Heart left ventricle (tissue), 16 donors: ENCODE measurements at regions of chr17 and their contacts with region 1.

Region 1: GRCh38 chr17:6104956-6105648 is 34.9 kb downstream of the WSCD1 start:
- DNase-seq: no peak
- ATAC-seq: no peak
- H3K4me3 ChIP-seq: no peak overlapping the region
- H3K27ac ChIP-seq: no peak overlapping the region
- H3K4me1 ChIP-seq: peaks cover 0 to 12% (median 0%) of the 10 kb centered on the region in 12 donors
- H3K27me3 ChIP-seq: peaks cover 0 to 9% (median 0%) of the 10 kb centered on the region in 9 donors
- CTCF ChIP-seq: no peak
- POLR2A ChIP-seq: no peak

Region 2: GRCh38 chr17:6257336-6257735 is 152.2 kb after region 1 on chr17:
- intact Hi-C with region 1: no loop called
- DNase-seq: no peak
- ATAC-seq: no peak
- H3K4me3 ChIP-seq: no peak overlapping the region
- H3K27ac ChIP-seq: no peak overlapping the region
- H3K4me1 ChIP-seq: peaks cover 0 to 4% (median 0%) of the 10 kb centered on the region in 12 donors
- H3K27me3 ChIP-seq: peaks cover 0 to 17% (median 0%) of the 10 kb centered on the region in 9 donors
- CTCF ChIP-seq: no peak
- POLR2A ChIP-seq: no peak

Region 3: DNA sequence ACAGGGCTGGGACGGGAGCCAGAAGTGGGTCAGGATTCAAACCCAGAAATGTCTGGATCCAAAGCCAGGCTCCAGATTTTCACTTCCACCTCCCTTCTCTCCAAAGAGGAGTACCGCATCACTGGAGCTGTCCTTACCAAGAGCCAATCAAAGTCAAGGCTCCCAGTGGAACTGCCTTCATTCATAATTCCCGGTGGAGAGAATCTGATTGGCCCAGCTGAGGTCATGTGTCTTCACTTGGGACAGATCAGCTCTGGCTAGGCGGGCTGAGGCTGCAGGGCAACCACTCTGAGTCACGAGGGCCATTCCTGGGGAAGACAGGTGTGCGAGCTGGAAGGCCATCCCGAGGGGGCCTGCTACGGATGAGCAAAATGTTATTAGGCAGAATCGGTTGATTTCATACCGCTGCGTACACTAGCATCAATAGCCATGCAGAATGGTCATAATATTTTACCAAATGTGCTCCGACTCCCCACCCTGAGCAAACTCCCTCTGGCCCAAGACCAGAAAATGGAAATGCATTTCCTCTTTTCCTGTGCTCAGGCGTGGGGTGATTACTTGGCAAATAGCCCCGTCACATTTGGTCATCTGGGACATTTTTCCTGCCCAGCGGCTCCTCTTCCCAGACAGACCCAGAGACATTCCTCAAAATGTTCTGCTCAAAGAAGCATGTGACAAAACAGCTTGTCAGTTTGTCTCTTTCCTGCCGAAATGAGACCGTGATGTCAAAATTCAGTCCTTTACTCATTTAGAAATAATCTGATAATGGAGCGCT is 218.7 kb after region 1 on chr17:
- intact Hi-C with region 1: loop called in 1 of 10 experiments (anchors 5 kb)
- DNase-seq: peak in 2 of 5 donors; percentile 26 to 33
- ATAC-seq: peak in 1 of 4 donors; percentile 61
- H3K4me3 ChIP-seq: peak overlapping the region in 1 of 12 donors; percentile 11
- H3K27ac ChIP-seq: peak overlapping the region in 7 of 12 donors; percentile 4 to 59 (median 39)
- H3K4me1 ChIP-seq: peaks cover 0 to 40% (median 8%) of the 10 kb centered on the region in 12 donors
- H3K27me3 ChIP-seq: no peaks in the 10 kb centered on the region
- CTCF ChIP-seq: no peak
- POLR2A ChIP-seq: no peak

Region 4: GRCh38 chr17:6334395-6334794 is 229.3 kb after region 1 on chr17:
- intact Hi-C with region 1: loop called in 2 of 10 experiments (anchors 5 to 10 kb)
- DNase-seq: no peak
- ATAC-seq: no peak
- H3K4me3 ChIP-seq: no peak overlapping the region
- H3K27ac ChIP-seq: no peak overlapping the region
- H3K4me1 ChIP-seq: no peaks in the 10 kb centered on the region
- H3K27me3 ChIP-seq: no peaks in the 10 kb centered on the region
- CTCF ChIP-seq: no peak
- POLR2A ChIP-seq: no peak